Naive thymus-derived CD4-positive, alpha-beta T cell (primary cell): ENCODE measurements at regions of chr2 and their contacts with region 1.

Region 1: DNA sequence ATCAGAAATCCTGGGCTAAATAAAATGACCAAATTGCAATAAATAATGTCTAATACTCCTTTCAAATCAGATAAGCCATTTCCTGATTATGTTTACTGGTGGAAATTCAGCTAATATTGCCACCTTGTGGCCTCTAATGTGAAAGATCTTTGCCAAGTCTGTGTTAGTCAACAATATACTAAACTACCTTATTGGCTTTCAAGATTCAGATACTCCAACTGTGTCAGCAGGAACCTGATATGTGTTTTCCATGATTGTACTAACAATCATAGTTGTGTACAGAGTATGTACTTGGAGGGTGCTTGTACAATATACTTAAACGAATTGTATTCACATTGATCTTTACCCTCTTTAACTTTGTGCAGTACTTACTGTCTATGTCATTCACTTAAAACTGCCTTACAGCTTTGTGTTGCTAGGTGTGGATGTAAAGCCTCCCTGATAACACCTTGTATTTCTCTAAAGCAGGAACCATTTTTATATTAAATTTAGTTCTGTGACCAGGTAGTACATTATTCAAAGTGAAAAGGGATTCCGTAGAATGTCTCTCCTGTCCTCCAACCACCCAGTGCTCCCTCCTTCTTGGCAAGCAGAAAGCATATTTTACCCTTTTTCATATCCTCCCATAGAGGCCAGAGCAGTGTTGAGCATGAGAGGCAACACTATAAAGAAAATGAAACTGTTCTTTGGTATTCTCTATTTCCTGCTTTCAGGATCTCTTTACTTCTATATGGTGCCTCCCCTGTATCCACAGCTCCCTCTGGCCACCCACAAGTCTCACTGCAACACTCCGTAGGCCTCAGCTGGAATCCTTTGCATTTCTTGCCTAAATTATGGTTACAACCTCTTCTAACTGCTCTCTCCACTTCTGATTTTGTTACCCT is 75.2 kb upstream of the C2orf15 start:
- DNase-seq: peak in 7 of 9 donors; percentile 22 to 54 (median 40)
- ATAC-seq: peak; percentile 93
- H3K4me3 ChIP-seq: no peak overlapping the region
- H3K4me3 Mint-ChIP-seq: no peak overlapping the region
- H3K27ac ChIP-seq: peak overlapping the region; percentile 52
- H3K27ac Mint-ChIP-seq: no peak overlapping the region
- H3K4me1 ChIP-seq: peaks cover 8 to 23% of the 10 kb centered on the region in 2 donors
- H3K4me1 Mint-ChIP-seq: peaks cover 0 to 6% (median 0%) of the 10 kb centered on the region in 7 donors
- H3K27me3 ChIP-seq: no peaks in the 10 kb centered on the region
- H3K27me3 Mint-ChIP-seq: peaks cover 0 to 3% (median 0%) of the 10 kb centered on the region in 5 donors

Region 2: DNA sequence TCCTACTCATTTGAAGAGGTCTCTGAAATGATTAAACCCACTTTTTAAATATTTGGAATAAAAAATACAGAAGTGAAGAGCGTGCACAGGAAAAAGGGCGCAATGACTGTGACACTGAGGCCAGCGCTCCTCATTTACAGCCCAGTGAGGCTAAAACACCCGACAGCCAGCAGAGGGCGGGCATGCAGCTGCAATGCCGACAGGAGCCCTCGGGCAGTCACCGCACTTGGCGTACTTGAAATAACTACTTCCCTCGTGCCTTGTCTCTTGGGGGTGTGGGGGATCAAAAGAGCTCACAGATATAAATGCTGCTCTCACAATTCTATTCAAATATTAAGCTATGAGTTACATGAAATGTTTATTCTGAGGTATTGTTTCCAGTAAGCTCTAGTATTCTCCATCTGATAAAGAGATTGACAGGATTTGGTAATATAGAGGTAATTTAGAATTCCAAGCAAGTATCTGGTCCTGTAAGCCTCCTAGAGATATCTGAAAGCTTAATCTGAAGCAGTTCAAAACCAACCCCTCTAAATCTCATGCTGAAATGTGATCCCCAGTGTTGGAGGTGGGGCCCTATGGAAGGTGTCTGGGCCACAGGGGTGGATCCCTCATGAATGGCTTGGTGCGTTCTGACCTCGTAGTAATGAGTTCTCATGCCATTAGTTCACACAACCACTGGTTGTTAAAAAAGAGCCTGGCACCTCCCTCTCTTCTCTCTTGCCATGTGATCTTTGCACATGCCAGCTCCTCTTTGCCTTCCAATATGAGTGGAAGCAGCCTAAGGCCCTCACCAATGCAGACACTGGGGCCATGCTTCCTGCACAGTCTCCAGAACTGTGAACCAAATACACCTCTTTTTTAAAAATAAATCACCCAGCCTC is 1259.3 kb before region 1 on chr2:
- CTCF ChIA-PET with region 1: no interaction called
- POLR2A ChIA-PET with region 1: no interaction called
- intact Hi-C with region 1: loop called in 1 of 2 experiments (anchors 1 kb)
- DNase-seq: peak; percentile 48 to 75 (median 69)
- ATAC-seq: peak; percentile 97
- H3K4me3 ChIP-seq: no peak overlapping the region
- H3K4me3 Mint-ChIP-seq: no peak overlapping the region
- H3K27ac ChIP-seq: no peak overlapping the region
- H3K27ac Mint-ChIP-seq: no peak overlapping the region
- H3K4me1 ChIP-seq: peaks cover 0 to 6% of the 10 kb centered on the region in 2 donors
- H3K4me1 Mint-ChIP-seq: peaks cover 0 to 8% (median 0%) of the 10 kb centered on the region in 7 donors
- H3K27me3 ChIP-seq: no peaks in the 10 kb centered on the region
- H3K27me3 Mint-ChIP-seq: no peaks in the 10 kb centered on the region

Region 3: GRCh38 chr2:98608116-98608999 is 458.0 kb before region 1 on chr2 and contains the starts of genes COA5 and UNC50:
- CTCF ChIA-PET with region 1: no interaction called
- POLR2A ChIA-PET with region 1: no interaction called
- intact Hi-C with region 1: loop called in 1 of 2 experiments (anchors 10 kb)
- DNase-seq: peak; percentile 82 to 94 (median 87)
- ATAC-seq: peak; percentile 93
- H3K4me3 ChIP-seq: peak within 1 kb of the TSS; percentile 94
- H3K4me3 Mint-ChIP-seq: peak within 1 kb of the TSS; percentile 82 to 97 (median 90)
- H3K27ac ChIP-seq: peak within 1 kb of the TSS; percentile 97
- H3K27ac Mint-ChIP-seq: peak within 1 kb of the TSS; percentile 81 to 97 (median 92)
- H3K4me1 ChIP-seq: peaks cover 39 to 48% of the 10 kb centered on the region in 2 donors
- H3K4me1 Mint-ChIP-seq: peaks cover 51 to 82% (median 70%) of the 10 kb centered on the region in 7 donors
- H3K27me3 ChIP-seq: no peaks in the 10 kb centered on the region
- H3K27me3 Mint-ChIP-seq: no peaks in the 10 kb centered on the region
- total RNA-seq, gene COA5: 23.8 to 55.2 (median 29.2) TPM
- total RNA-seq, gene UNC50: 22.2 to 41.3 (median 29.9) TPM

Region 4: DNA sequence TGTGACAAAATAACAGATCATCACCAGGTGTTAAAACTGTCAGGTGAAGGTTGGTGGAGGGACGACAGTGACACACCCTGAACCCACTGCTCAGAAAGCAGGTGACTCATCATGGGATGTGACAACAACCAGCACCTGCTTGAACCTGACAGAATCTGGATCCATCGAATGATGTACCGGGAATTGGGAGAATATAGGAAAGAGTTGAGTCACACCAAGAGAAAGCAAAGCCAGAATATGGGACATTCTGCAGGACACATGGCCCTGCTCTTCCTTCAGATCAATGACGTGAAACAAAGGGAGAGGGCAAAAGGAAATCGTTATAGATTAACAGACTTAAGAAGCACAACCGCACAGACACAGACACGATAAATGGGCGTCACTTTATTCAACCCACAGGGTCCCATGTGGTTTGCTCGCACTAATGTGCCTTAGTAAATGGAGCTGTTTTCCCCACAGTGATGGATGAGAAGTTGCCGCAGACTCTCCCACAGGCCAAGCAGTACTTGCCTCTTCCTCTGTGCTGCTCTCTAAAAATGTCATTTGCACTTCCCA is 230.4 kb before region 1 on chr2:
- CTCF ChIA-PET with region 1: no interaction called
- POLR2A ChIA-PET with region 1: no interaction called
- intact Hi-C with region 1: loop called (anchors 2 kb)
- DNase-seq: peak in 7 of 9 donors; percentile 55 to 78 (median 72)
- ATAC-seq: peak; percentile 87
- H3K4me3 ChIP-seq: peak overlapping the region; percentile 1
- H3K4me3 Mint-ChIP-seq: peak overlapping the region; percentile 32 to 79 (median 52)
- H3K27ac ChIP-seq: peak overlapping the region; percentile 66
- H3K27ac Mint-ChIP-seq: peak overlapping the region; percentile 78 to 98 (median 88)
- H3K4me1 ChIP-seq: peaks cover 16 to 43% of the 10 kb centered on the region in 2 donors
- H3K4me1 Mint-ChIP-seq: peaks cover 24 to 51% (median 28%) of the 10 kb centered on the region in 7 donors
- H3K27me3 ChIP-seq: no peaks in the 10 kb centered on the region
- H3K27me3 Mint-ChIP-seq: peaks cover 0 to 17% (median 0%) of the 10 kb centered on the region in 5 donors

Region 5: GRCh38 chr2:99154643-99155536 is 88.6 kb after region 1 on chr2 and contains the starts of genes LIPT1 and TSGA10:
- CTCF ChIA-PET with region 1: no interaction called
- POLR2A ChIA-PET with region 1: no interaction called
- intact Hi-C with region 1: loop called in 1 of 2 experiments (anchors 2 kb)
- DNase-seq: peak; percentile 80 to 95 (median 92)
- ATAC-seq: peak; percentile 98
- H3K4me3 ChIP-seq: peak within 1 kb of the TSS; percentile 83
- H3K4me3 Mint-ChIP-seq: peak within 1 kb of the TSS in 1 of 10 donors; percentile 93
- H3K27ac ChIP-seq: peak within 1 kb of the TSS; percentile 92
- H3K27ac Mint-ChIP-seq: peak within 1 kb of the TSS in 2 of 9 donors; percentile 96 to 97
- H3K4me1 ChIP-seq: peaks cover 15 to 18% of the 10 kb centered on the region in 2 donors
- H3K4me1 Mint-ChIP-seq: peaks cover 25 to 57% (median 42%) of the 10 kb centered on the region in 7 donors
- H3K27me3 ChIP-seq: no peaks in the 10 kb centered on the region
- H3K27me3 Mint-ChIP-seq: no peaks in the 10 kb centered on the region
- total RNA-seq, gene LIPT1: 7.7 to 24.1 (median 15.9) TPM
- total RNA-seq, gene TSGA10: 3.5 to 31.7 (median 12.6) TPM

Region 6: GRCh38 chr2:99238599-99238998 is 172.3 kb after region 1 on chr2:
- CTCF ChIA-PET with region 1: no interaction called
- POLR2A ChIA-PET with region 1: no interaction called
- intact Hi-C with region 1: no loop called
- DNase-seq: no peak
- ATAC-seq: no peak
- H3K4me3 ChIP-seq: no peak overlapping the region
- H3K4me3 Mint-ChIP-seq: no peak overlapping the region
- H3K27ac ChIP-seq: no peak overlapping the region
- H3K27ac Mint-ChIP-seq: no peak overlapping the region
- H3K4me1 ChIP-seq: no peaks in the 10 kb centered on the region
- H3K4me1 Mint-ChIP-seq: peaks cover 0 to 4% (median 0%) of the 10 kb centered on the region in 7 donors
- H3K27me3 ChIP-seq: no peaks in the 10 kb centered on the region
- H3K27me3 Mint-ChIP-seq: no peaks in the 10 kb centered on the region